ENCODE measurements at regions of chr12 and their contacts with region 1.

Region 1: GRCh38 chr12:823028-823698 is 70.8 kb downstream of the WNK1 start:
- DNase-seq: no peak
- H3K4me3 ChIP-seq: no peak overlapping the region
- H3K4me3 Mint-ChIP-seq: peak overlapping the region in 3 of 8 donors; percentile 6 to 65 (median 64)
- H3K27ac ChIP-seq: no peak overlapping the region
- H3K27ac Mint-ChIP-seq: peak overlapping the region in 4 of 7 donors; percentile 8 to 62 (median 44)
- H3K4me1 ChIP-seq: peaks cover 64% of the 10 kb centered on the region
- H3K4me1 Mint-ChIP-seq: peaks cover 31 to 65% (median 48%) of the 10 kb centered on the region in 4 donors
- H3K27me3 ChIP-seq: no peaks in the 10 kb centered on the region
- H3K27me3 Mint-ChIP-seq: no peaks in the 10 kb centered on the region

Region 2: DNA sequence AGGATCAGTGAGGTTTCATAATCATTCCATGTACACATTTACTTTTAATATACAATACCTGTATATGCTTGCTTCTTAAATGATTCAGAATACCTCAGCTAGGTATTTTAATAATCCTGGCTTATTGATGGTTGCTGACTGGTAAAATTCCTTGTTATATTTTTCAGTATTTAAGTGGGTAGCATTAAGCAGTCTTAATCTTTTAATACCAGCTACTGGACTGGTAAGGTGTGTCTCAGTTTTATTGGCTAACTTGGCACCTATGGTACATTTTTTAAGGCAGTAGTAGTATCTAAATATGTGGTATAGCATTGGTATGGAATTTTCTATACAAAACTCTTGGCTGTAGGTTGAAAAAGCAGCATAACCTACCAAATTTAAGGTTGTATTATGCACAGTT is 29.7 kb after region 1 on chr12:
- CTCF ChIA-PET with region 1: no interaction called
- POLR2A ChIA-PET with region 1: no interaction called
- intact Hi-C with region 1: no loop called
- DNase-seq: no peak
- H3K4me3 ChIP-seq: no peak overlapping the region
- H3K4me3 Mint-ChIP-seq: no peak overlapping the region
- H3K27ac ChIP-seq: no peak overlapping the region
- H3K27ac Mint-ChIP-seq: peak overlapping the region in 4 of 7 donors; percentile 17 to 80 (median 57)
- H3K4me1 ChIP-seq: peaks cover 34% of the 10 kb centered on the region
- H3K4me1 Mint-ChIP-seq: peaks cover 21 to 46% (median 36%) of the 10 kb centered on the region in 4 donors
- H3K27me3 ChIP-seq: no peaks in the 10 kb centered on the region
- H3K27me3 Mint-ChIP-seq: no peaks in the 10 kb centered on the region

Region 3: GRCh38 chr12:1583421-1584078 is 760.4 kb after region 1 on chr12:
- CTCF ChIA-PET with region 1: no interaction called
- POLR2A ChIA-PET with region 1: no interaction called
- intact Hi-C with region 1: loop called (anchors 5 kb)
- DNase-seq: peak; percentile 60 to 68 (median 67)
- H3K4me3 ChIP-seq: no peak overlapping the region
- H3K4me3 Mint-ChIP-seq: peak overlapping the region in 2 of 8 donors; percentile 45 to 51
- H3K27ac ChIP-seq: no peak overlapping the region
- H3K27ac Mint-ChIP-seq: peak overlapping the region in 5 of 7 donors; percentile 35 to 81 (median 72)
- H3K4me1 ChIP-seq: peaks cover 21% of the 10 kb centered on the region
- H3K4me1 Mint-ChIP-seq: peaks cover 14 to 22% (median 19%) of the 10 kb centered on the region in 4 donors
- H3K27me3 ChIP-seq: no peaks in the 10 kb centered on the region
- H3K27me3 Mint-ChIP-seq: no peaks in the 10 kb centered on the region